ENCODE measurements at regions of chr7 and their contacts with region 1.

Region 1: GRCh38 chr7:87152107-87152844 is at the start of gene DMTF1:
- DNase-seq: peak; percentile 87 to 92
- ATAC-seq: peak; percentile 93 to 95
- H3K4me3 ChIP-seq: peak within 1 kb of the TSS; percentile 75 to 98 (median 86)
- H3K27ac ChIP-seq: peak within 1 kb of the TSS; percentile 92 to 98 (median 98)
- H3K4me1 ChIP-seq: peaks cover 48 to 50% of the 10 kb centered on the region in 2 donors
- H3K27me3 ChIP-seq: no peaks in the 10 kb centered on the region
- CTCF ChIP-seq: peak in 1 of 5 experiments; percentile 13
- POLR2A ChIP-seq: peak; percentile 84 to 88
- total RNA-seq, gene DMTF1: 10.6 to 31.9 (median 13.1) TPM

Region 2: GRCh38 chr7:86939197-86939814 is 213.0 kb before region 1 on chr7:
- in situ Hi-C with region 1: loop called in 2 of 4 experiments (anchors 10 kb)
- intact Hi-C with region 1: loop called (anchors 1 kb)
- DNase-seq: no peak
- ATAC-seq: peak; percentile 78
- H3K4me3 ChIP-seq: no peak overlapping the region
- H3K27ac ChIP-seq: no peak overlapping the region
- H3K4me1 ChIP-seq: peaks cover 0 to 4% of the 10 kb centered on the region in 2 donors
- H3K27me3 ChIP-seq: no peaks in the 10 kb centered on the region
- CTCF ChIP-seq: peak; percentile 50 to 77 (median 66)
- POLR2A ChIP-seq: no peak

Region 3: DNA sequence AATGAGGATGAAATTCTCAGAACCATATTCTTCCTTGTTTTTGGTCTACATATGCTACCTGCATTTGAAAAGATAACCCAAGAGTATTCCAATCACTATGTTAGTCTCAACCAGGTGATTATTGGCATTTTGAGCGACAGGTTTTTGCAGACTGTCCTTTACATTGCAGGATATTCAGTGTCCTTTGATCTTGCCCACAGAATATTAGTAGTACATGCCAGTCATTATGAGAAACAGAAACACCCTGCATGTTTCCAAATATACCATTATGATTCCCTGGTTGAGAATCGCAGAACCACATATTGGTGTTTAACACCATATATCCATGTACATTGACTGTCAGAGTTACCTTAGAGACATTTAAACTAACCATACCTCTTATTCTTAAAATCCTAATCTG is 36.7 kb after region 1 on chr7:
- in situ Hi-C with region 1: no loop called
- intact Hi-C with region 1: loop called (anchors 5 kb)
- DNase-seq: no peak
- ATAC-seq: no peak
- H3K4me3 ChIP-seq: no peak overlapping the region
- H3K27ac ChIP-seq: no peak overlapping the region
- H3K4me1 ChIP-seq: no peaks in the 10 kb centered on the region
- H3K27me3 ChIP-seq: no peaks in the 10 kb centered on the region
- CTCF ChIP-seq: no peak
- POLR2A ChIP-seq: no peak

Region 4: DNA sequence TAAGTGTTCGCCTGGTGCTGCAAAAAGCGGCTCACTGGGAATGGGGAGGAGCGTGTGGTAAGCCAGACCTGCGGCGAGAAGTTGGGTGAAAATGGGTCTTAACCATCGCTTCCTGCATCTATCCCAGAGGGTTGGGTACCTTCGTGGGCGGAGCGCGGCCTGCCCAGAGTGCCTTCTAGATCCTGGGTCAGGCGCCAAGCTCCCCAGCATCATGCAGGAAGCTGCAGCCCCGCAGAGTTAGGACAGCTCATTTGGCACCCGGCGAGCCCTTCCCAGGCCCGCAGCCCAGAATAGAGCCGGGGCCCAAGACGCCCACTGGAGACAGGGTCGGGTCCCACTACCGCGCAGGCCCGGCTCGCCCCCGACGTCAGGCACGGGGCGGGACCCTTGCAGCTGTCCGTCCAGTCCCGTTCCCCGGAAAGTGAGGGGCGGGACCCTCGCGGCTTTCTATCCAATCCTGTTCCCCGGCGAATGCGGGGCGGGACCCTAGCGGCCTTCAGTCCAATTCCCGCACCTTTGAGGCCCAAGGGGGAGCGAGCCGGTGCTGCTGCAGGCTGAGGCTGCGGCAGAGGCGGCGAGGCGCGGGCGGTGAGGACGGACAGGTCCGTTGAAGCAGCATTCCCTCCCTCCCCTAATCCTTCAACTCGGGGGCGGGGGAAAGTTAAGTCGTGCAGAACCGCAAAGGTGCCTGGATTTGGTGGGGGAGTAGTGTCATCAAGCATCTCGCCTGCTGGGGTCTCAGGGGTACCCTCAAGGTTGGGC is 193.1 kb after region 1 on chr7 and contains the start of gene CROT:
- in situ Hi-C with region 1: no loop called
- intact Hi-C with region 1: loop called (anchors 5 kb)
- DNase-seq: peak; percentile 90 to 91
- ATAC-seq: peak; percentile 99
- H3K4me3 ChIP-seq: peak within 1 kb of the TSS; percentile 69 to 83 (median 76)
- H3K27ac ChIP-seq: peak within 1 kb of the TSS; percentile 73 to 83 (median 81)
- H3K4me1 ChIP-seq: peaks cover 6 to 19% of the 10 kb centered on the region in 2 donors
- H3K27me3 ChIP-seq: no peaks in the 10 kb centered on the region
- CTCF ChIP-seq: no peak
- POLR2A ChIP-seq: peak; percentile 29 to 53
- total RNA-seq, gene CROT: 3.6 to 16.3 (median 7.9) TPM

Region 5: GRCh38 chr7:87876040-87876868 is 724.0 kb after region 1 on chr7 and contains the starts of genes DBF4 and SLC25A40:
- in situ Hi-C with region 1: no loop called
- intact Hi-C with region 1: loop called (anchors 5 kb)
- DNase-seq: peak; percentile 90 to 92
- ATAC-seq: peak; percentile 88 to 95
- H3K4me3 ChIP-seq: peak within 1 kb of the TSS; percentile 79 to 96 (median 86)
- H3K27ac ChIP-seq: peak within 1 kb of the TSS; percentile 93 to 97 (median 95)
- H3K4me1 ChIP-seq: peaks cover 28 to 33% of the 10 kb centered on the region in 2 donors
- H3K27me3 ChIP-seq: no peaks in the 10 kb centered on the region
- CTCF ChIP-seq: peak in 1 of 5 experiments; percentile 24
- POLR2A ChIP-seq: peak; percentile 65 to 87
- total RNA-seq, gene DBF4: 2.2 to 5.9 (median 3.2) TPM
- total RNA-seq, gene SLC25A40: 3.2 to 14.8 (median 8.6) TPM